ENCODE measurements at regions of chr5 and their contacts with region 1.

Region 1: GRCh38 chr5:97534166-97534565 is 351.1 kb upstream of the RIOK2 start:
- DNase-seq: peak; percentile 51
- ATAC-seq: peak; percentile 89
- H3K4me3 ChIP-seq: no peak overlapping the region
- H3K27ac ChIP-seq: no peak overlapping the region
- H3K4me1 ChIP-seq: no peaks in the 10 kb centered on the region
- H3K27me3 ChIP-seq: no peaks in the 10 kb centered on the region
- CTCF ChIP-seq: peak; percentile 46 to 77 (median 69); a peak in 5 of 6 replicates
- POLR2A ChIP-seq: no peak
- RAD21 ChIP-seq: peak; percentile 67

Region 2: GRCh38 chr5:97231025-97231636 is 303.0 kb before region 1 on chr5:
- CTCF ChIA-PET with region 1: interaction called, 29 read pairs
- POLR2A ChIA-PET with region 1: no interaction called
- RAD21 ChIA-PET with region 1: interaction called in 1 of 2 experiments, 3 read pairs
- intact Hi-C with region 1: loop called (anchors 2 kb)
- DNase-seq: peak; percentile 54
- ATAC-seq: peak; percentile 78
- H3K4me3 ChIP-seq: no peak overlapping the region
- H3K27ac ChIP-seq: no peak overlapping the region
- H3K4me1 ChIP-seq: no peaks in the 10 kb centered on the region
- H3K27me3 ChIP-seq: no peaks in the 10 kb centered on the region
- CTCF ChIP-seq: peak; percentile 55 to 89 (median 81); a peak in 5 of 6 replicates
- POLR2A ChIP-seq: no peak
- RAD21 ChIP-seq: peak; percentile 70

Region 3: DNA sequence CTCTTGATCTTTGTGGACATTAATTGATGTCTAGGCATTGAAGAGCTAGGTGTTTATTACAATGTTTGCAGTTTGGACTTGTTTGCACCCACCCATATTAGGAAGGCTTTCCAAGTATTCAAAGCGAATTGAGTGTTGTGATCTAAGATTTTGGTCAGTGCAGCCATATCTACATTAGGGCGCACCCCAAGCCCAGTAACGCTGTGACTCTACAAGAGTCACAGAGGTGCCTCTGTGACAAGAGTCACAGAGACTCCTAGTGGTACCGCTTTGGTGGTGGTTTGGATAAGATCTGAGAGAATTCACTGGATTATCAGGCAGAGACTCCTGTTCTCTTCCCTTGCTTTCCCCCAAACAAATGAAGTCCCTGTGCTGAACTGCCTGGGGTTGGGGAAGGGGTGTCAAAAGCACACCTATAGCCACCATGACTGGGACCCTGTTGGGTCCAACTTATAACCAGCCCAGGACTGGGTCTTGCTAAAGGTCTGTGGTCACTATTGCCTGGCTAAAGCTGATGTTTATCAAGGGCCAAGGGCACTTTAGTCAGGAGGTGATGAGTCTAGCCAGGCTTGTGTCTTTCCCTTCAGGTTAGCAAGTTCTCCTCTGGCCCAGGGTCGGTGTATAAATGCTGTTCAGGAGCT is 237.0 kb before region 1 on chr5:
- CTCF ChIA-PET with region 1: interaction called, 7 read pairs
- POLR2A ChIA-PET with region 1: no interaction called
- RAD21 ChIA-PET with region 1: interaction called in 1 of 2 experiments, 3 read pairs
- intact Hi-C with region 1: loop called (anchors 1 kb)
- DNase-seq: peak; percentile 60
- ATAC-seq: peak; percentile 100
- H3K4me3 ChIP-seq: no peak overlapping the region
- H3K27ac ChIP-seq: no peak overlapping the region
- H3K4me1 ChIP-seq: no peaks in the 10 kb centered on the region
- H3K27me3 ChIP-seq: no peaks in the 10 kb centered on the region
- CTCF ChIP-seq: peak; percentile 65 to 94 (median 72)
- POLR2A ChIP-seq: no peak
- RAD21 ChIP-seq: peak; percentile 77

Region 4: DNA sequence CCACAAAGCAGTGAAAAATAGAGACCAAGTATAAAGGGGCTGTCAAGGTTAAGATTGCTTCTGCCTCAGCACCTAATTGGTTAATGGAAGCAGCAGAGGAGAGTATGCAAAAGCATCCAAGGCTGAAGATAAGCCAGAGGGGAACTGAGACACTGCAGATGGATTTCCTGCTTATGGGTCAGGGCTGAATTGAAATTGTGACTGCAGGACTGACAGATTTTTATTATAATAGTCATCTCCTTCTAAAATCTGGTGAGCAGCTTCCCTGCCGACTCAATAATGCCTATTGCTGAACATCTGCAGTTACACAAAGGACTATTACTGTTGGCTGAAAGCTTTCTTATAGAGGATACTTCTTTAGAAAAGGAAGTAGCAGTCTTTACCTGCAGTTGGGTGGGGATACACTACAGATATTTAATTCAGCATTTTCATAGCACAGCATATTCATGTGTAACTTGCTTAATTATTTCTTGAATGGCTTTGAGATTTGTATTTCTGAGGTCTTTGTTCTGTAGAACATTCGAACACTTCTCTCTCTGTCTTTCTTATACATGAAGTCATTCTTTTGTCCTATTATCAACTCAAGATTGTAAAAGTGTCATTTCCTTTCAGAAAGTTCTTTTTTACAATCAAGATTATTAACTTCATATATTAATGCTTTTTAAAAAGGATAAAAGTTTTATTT is 11.9 kb after region 1 on chr5:
- CTCF ChIA-PET with region 1: interaction called, 10 read pairs
- POLR2A ChIA-PET with region 1: no interaction called
- RAD21 ChIA-PET with region 1: no interaction called
- intact Hi-C with region 1: no loop called
- DNase-seq: no peak
- ATAC-seq: no peak
- H3K4me3 ChIP-seq: no peak overlapping the region
- H3K27ac ChIP-seq: no peak overlapping the region
- H3K4me1 ChIP-seq: no peaks in the 10 kb centered on the region
- H3K27me3 ChIP-seq: no peaks in the 10 kb centered on the region
- CTCF ChIP-seq: no peak
- POLR2A ChIP-seq: no peak
- RAD21 ChIP-seq: no peak

Measured in HCT116 (cell line).